Mammary epithelial cell (primary cell): ENCODE measurements at regions of chr1 and their contacts with region 1.

Region 1: GRCh38 chr1:46203738-46204405 is 738 bp downstream of the LURAP1 start:
- DNase-seq: peak; percentile 21
- H3K4me3 ChIP-seq: peak overlapping the region; percentile 84 to 95 (median 92)
- H3K27ac ChIP-seq: peak overlapping the region; percentile 31
- H3K4me1 ChIP-seq: peaks cover 21% of the 10 kb centered on the region
- H3K27me3 ChIP-seq: no peaks in the 10 kb centered on the region
- CTCF ChIP-seq: no peak

Region 2: DNA sequence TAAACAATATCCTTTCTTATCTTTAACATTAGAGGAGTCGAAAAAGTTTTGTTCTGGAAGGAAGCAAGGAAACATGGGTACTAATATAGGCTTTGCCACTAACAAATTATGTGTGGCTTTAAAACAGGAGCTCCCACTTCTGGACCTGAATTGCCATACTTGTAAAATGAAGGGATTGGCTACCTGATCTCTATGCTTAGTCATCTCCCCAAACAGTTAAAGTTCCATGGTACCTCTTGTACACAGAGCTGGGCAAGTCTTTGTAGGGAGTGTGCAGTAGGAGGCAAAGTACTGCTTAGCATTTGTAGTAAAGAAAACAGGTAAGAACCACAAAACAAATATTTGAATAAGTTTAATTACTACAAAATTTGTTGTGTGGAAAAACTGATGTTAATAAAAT is 319.2 kb before region 1 on chr1:
- CTCF ChIA-PET with region 1: no interaction called
- dilution Hi-C with region 1: no loop called
- in situ Hi-C with region 1: no loop called
- intact Hi-C with region 1: no loop called
- DNase-seq: peak; percentile 56
- H3K4me3 ChIP-seq: no peak overlapping the region
- H3K27ac ChIP-seq: no peak overlapping the region
- H3K4me1 ChIP-seq: peaks cover 5% of the 10 kb centered on the region
- H3K27me3 ChIP-seq: no peaks in the 10 kb centered on the region
- CTCF ChIP-seq: no peak

Region 3: DNA sequence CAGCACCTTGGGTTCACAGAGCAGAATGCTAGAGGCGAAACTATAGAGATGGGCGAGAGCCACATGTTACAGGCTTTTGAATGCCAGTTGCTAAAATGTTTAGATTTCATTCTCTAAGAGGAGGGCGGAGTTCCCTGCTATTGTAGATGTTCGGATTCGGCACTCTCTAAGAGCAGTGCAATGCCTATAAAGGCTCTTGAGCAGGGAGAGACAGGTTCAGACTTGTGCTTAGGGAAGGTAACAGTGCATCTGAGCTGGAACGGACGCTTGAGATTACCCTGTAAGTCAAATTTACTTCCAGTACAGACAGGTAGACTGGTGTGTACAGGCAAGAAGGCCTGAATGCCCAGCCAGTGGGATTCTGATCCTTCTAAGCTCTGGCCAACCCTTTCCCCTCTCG is 14.6 kb after region 1 on chr1:
- CTCF ChIA-PET with region 1: interaction called, 4 read pairs
- dilution Hi-C with region 1: no loop called
- in situ Hi-C with region 1: no loop called
- intact Hi-C with region 1: loop called (anchors 1 kb)
- DNase-seq: peak; percentile 94
- H3K4me3 ChIP-seq: peak overlapping the region in 1 of 3 experiments; percentile 26
- H3K27ac ChIP-seq: peak overlapping the region; percentile 43
- H3K4me1 ChIP-seq: peaks cover 18% of the 10 kb centered on the region
- H3K27me3 ChIP-seq: no peaks in the 10 kb centered on the region
- CTCF ChIP-seq: no peak